Right lobe of liver (tissue), 6 donors: ENCODE measurements at regions of chr21 and their contacts with region 1.

Region 1: DNA sequence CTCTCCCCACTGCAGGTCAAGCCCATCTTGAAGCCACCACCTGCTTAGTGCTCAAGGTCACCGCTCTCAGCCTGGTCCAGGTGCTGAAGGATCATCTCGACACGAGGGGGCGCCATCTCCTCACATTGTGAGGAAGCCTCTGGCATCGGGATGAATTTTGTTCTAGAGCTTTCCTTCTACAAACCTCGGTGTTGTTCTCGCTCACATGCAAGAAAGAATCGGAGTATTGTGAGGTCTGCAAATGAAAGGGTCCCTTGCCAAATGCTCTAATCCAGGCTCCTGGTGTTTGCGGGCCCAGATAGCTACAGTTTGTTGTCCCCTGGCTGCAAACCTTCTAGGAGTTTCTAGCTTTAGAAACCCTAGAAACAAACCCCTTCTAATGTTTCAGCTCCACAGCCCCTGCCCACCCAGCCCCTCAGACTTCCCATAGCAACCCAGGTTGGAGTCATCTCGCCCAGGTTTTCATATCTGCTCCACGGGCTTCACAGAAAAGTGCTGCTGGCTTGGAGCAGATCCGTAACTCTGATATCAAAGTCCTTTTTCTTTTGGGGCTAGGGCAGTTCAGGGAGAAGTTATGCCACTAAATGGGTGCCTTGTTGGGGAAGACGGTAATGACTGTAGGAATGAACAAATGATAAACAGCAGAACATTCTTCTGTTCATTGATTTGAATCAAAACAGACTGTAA is 8.6 kb upstream of the ATP5PO start:
- DNase-seq: peak; percentile 89 to 91 (median 89)
- ATAC-seq: peak; percentile 98 to 100 (median 99)
- H3K4me3 ChIP-seq: peak overlapping the region in 2 of 3 donors; percentile 12 to 15
- H3K27ac ChIP-seq: peak overlapping the region in 2 of 3 donors; percentile 52 to 57
- H3K4me1 ChIP-seq: peaks cover 0 to 6% (median 0%) of the 10 kb centered on the region in 4 donors
- H3K27me3 ChIP-seq: no peaks in the 10 kb centered on the region
- CTCF ChIP-seq: peak; percentile 91 to 96 (median 93)
- POLR2A ChIP-seq: no peak

Region 2: GRCh38 chr21:34345091-34345871 is 421.1 kb after region 1 on chr21:
- intact Hi-C with region 1: loop called in 1 of 2 experiments (anchors 5 kb)
- DNase-seq: no peak
- ATAC-seq: no peak
- H3K4me3 ChIP-seq: no peak overlapping the region
- H3K27ac ChIP-seq: no peak overlapping the region
- H3K4me1 ChIP-seq: no peaks in the 10 kb centered on the region
- H3K27me3 ChIP-seq: no peaks in the 10 kb centered on the region
- CTCF ChIP-seq: no peak
- POLR2A ChIP-seq: no peak